HepG2 (cell line): ENCODE measurements at regions of chr14 and their contacts with region 1.

Region 1: GRCh38 chr14:70317969-70318634 is 41.4 kb downstream of the COX16 start:
- DNase-seq: peak; percentile 97
- ATAC-seq: peak; percentile 97
- H3K4me3 ChIP-seq: no peak overlapping the region; a peak in 1 of 6 replicates
- H3K27ac ChIP-seq: peak overlapping the region; percentile 69
- H3K4me1 ChIP-seq: peaks cover 35% of the 10 kb centered on the region
- H3K27me3 ChIP-seq: no peaks in the 10 kb centered on the region
- CTCF ChIP-seq: peak; percentile 88
- EP300 ChIP-seq: peak; percentile 80 to 93
- POLR2A ChIP-seq: no peak
- RAD21 ChIP-seq: peak; percentile 83

Region 2: DNA sequence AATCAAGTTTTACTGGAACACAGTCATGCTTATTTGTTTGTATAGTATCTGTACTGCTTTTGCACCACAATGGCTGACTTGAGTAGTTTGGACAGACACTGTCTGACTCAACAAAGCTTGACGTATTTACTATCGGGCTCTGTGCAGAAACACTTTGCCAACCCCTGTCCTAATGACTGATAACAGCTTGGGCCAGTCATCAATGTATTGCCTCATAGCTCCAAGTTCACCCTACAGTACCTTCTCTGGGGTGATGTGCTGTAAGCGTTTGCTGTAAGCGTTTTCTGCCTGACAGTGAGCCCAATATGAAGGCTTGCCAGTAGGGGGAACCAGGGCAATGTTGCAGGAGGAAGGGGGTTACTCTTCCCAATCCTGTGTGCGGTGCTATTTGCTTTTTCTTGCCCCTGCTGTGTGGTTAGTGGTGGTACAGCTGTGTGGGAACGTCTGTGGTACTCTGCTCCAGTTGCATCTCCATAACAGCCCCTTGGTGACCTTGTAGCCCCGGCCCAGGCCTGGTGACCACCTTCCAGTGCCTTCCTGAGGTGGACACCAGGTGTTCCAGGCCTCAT is 738.0 kb before region 1 on chr14:
- CTCF ChIA-PET with region 1: no interaction called
- POLR2A ChIA-PET with region 1: no interaction called
- in situ Hi-C with region 1: loop called (anchors 25 kb)
- intact Hi-C with region 1: loop called (anchors 1 kb)
- DNase-seq: peak; percentile 95
- ATAC-seq: peak; percentile 97
- H3K4me3 ChIP-seq: no peak overlapping the region
- H3K27ac ChIP-seq: peak overlapping the region; percentile 47
- H3K4me1 ChIP-seq: peaks cover 17% of the 10 kb centered on the region
- H3K27me3 ChIP-seq: peaks cover 0 to 21% of the 10 kb centered on the region in 2 experiments; a peak in 2 of 5 replicates
- CTCF ChIP-seq: peak; percentile 89
- EP300 ChIP-seq: peak; percentile 41 to 59; a peak in 1 of 4 replicates
- POLR2A ChIP-seq: no peak
- RAD21 ChIP-seq: peak; percentile 74; the same call in 1 of the 2 replicates

Region 3: GRCh38 chr14:69818757-69819191 is 499.3 kb before region 1 on chr14:
- CTCF ChIA-PET with region 1: interaction called, 7 read pairs
- POLR2A ChIA-PET with region 1: no interaction called
- in situ Hi-C with region 1: loop called (anchors 10 kb)
- intact Hi-C with region 1: loop called (anchors 2 kb)
- DNase-seq: peak; percentile 68
- ATAC-seq: peak; percentile 94
- H3K4me3 ChIP-seq: no peak overlapping the region
- H3K27ac ChIP-seq: no peak overlapping the region
- H3K4me1 ChIP-seq: peaks cover 12% of the 10 kb centered on the region
- H3K27me3 ChIP-seq: no peaks in the 10 kb centered on the region; a peak in 1 of 5 replicates
- CTCF ChIP-seq: peak; percentile 88
- EP300 ChIP-seq: no peak
- POLR2A ChIP-seq: no peak
- RAD21 ChIP-seq: peak; percentile 96

Region 4: DNA sequence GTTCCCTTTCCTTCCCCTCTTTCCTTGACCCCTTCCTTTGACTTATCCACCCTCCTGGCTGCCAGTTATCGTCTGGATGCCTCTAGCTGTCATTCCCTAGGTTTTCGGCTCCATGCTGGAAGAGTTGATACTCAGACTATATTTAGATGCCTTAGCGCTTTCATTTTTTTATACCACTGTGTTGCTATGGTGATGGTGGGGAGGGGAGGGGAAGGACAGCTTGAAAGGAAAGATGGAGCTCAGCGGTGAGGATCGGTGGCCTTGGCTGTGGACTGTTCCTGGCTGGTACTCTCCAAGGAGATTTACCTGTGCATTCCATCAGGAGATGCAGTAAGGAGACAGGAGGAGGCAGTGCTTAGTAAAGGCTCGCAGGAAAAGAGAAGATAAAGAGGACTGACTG is 238.0 kb before region 1 on chr14:
- CTCF ChIA-PET with region 1: no interaction called
- POLR2A ChIA-PET with region 1: no interaction called
- in situ Hi-C with region 1: loop called (anchors 5 kb)
- intact Hi-C with region 1: no loop called
- DNase-seq: no peak
- ATAC-seq: no peak
- H3K4me3 ChIP-seq: no peak overlapping the region
- H3K27ac ChIP-seq: no peak overlapping the region
- H3K4me1 ChIP-seq: peaks cover 12% of the 10 kb centered on the region
- H3K27me3 ChIP-seq: no peaks in the 10 kb centered on the region; a peak in 1 of 5 replicates
- CTCF ChIP-seq: no peak
- EP300 ChIP-seq: no peak
- POLR2A ChIP-seq: no peak
- RAD21 ChIP-seq: no peak

Region 5: DNA sequence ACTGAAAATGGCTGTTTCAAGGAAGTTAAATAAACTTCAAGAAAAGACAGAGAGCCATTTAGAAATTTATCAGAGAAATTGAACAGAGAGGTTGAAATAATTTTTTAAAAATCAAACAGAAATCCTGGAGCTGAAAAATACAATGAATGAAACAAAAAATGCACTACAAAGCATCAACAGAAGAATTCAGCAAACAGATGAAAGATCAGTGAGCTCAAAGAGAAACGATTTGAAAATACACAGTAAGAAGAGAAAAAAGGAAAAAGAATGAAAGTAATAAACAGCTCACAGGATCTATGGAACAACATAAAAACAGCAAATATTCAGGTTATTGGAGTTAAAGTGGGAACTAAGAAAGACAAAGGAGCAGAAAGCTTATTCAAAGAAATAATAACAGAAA is 15.2 kb after region 1 on chr14:
- CTCF ChIA-PET with region 1: no interaction called
- POLR2A ChIA-PET with region 1: no interaction called
- in situ Hi-C with region 1: no loop called
- intact Hi-C with region 1: no loop called
- DNase-seq: no peak
- ATAC-seq: no peak
- H3K4me3 ChIP-seq: no peak overlapping the region
- H3K27ac ChIP-seq: no peak overlapping the region
- H3K4me1 ChIP-seq: 0 out of 2 replicates have a peak, but pooled peaks cover 5% of the 10 kb centered on the region
- H3K27me3 ChIP-seq: no peaks in the 10 kb centered on the region
- CTCF ChIP-seq: no peak
- EP300 ChIP-seq: no peak
- POLR2A ChIP-seq: no peak
- RAD21 ChIP-seq: no peak

Region 6: DNA sequence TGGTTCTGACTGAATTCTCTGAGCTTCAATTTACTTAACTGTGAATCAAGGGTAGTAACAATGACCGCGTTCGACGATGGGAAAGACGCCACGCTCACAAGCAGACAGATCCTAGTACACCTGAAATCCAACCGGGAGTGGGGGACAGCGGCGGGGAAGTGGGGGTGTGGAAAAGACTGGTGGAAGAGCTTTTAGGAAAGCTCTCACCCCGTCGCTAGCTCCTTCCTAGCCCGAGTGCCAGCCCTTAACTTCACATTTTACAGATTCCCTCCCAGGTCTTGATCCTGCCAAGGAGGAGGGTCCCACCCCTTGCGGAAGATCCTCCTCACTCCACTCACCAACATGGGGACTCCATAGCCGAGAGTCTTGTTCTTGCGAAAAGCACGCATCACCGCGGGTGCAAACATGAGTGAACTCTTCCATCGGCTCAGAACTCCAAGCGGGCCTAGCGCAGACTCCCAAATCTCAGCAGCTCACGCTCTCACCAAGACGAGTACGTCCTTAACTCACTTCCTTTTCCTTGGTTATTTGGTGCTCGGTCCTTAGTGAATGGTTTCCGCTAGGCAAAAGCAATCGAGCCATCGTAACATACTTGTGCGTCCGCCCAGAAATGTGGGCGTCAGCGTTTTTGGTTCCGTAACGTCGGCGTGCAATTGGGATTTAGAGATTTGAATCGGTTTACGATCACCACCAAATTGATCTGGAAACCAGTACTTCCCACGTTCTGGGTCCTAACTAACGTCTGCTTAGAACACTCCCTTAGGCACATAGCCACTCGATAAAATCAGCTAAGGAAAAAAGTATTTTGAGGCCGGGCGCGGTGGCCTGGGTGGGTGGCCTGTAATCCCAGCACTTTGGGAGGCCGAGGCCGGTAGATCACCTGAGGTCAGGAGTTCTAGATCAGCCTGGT is 41.3 kb after region 1 on chr14 and contains the start of gene COX16:
- CTCF ChIA-PET with region 1: no interaction called
- POLR2A ChIA-PET with region 1: no interaction called
- in situ Hi-C with region 1: no loop called
- intact Hi-C with region 1: loop called (anchors 2 kb)
- DNase-seq: peak; percentile 91
- ATAC-seq: peak; percentile 97
- H3K4me3 ChIP-seq: peak within 1 kb of the TSS; percentile 74 to 93 (median 89)
- H3K27ac ChIP-seq: peak within 1 kb of the TSS; percentile 85
- H3K4me1 ChIP-seq: peaks cover 29% of the 10 kb centered on the region
- H3K27me3 ChIP-seq: no peaks in the 10 kb centered on the region; a peak in 2 of 5 replicates
- CTCF ChIP-seq: no peak
- EP300 ChIP-seq: peak in 1 of 2 experiments; percentile 53; a peak in 1 of 4 replicates
- POLR2A ChIP-seq: peak; percentile 86 to 89
- RAD21 ChIP-seq: peak; percentile 61
- total RNA-seq, gene COX16: 71.0 and 88.1 TPM in 2 replicates

Region 7: DNA sequence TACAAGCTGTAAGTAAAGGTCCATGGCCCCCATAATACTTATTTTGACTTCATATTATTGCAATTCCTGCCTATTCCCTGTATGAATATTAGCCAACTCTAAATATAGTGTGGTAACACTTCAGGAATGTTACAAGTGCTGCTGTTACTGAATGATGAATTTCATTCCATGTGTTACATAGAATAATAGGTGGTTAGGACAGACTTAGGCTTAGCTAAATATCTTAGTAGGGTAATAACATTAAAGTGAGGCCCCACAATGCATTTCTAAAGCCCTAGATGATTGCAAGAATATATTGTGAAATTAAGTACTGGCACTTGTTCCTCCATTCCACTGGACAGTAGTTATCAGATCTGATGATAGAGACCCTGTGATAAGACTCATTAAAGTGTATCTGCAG is 771.9 kb after region 1 on chr14:
- CTCF ChIA-PET with region 1: no interaction called
- POLR2A ChIA-PET with region 1: no interaction called
- in situ Hi-C with region 1: no loop called
- intact Hi-C with region 1: no loop called
- DNase-seq: no peak
- ATAC-seq: no peak
- H3K4me3 ChIP-seq: no peak overlapping the region
- H3K27ac ChIP-seq: no peak overlapping the region
- H3K4me1 ChIP-seq: no peaks in the 10 kb centered on the region
- H3K27me3 ChIP-seq: no peaks in the 10 kb centered on the region
- CTCF ChIP-seq: no peak
- EP300 ChIP-seq: no peak
- POLR2A ChIP-seq: no peak
- RAD21 ChIP-seq: no peak